Posterior cingulate gyrus (tissue), 11 donors: ENCODE measurements at regions of chr15 and their contacts with region 1.

Region 1: DNA sequence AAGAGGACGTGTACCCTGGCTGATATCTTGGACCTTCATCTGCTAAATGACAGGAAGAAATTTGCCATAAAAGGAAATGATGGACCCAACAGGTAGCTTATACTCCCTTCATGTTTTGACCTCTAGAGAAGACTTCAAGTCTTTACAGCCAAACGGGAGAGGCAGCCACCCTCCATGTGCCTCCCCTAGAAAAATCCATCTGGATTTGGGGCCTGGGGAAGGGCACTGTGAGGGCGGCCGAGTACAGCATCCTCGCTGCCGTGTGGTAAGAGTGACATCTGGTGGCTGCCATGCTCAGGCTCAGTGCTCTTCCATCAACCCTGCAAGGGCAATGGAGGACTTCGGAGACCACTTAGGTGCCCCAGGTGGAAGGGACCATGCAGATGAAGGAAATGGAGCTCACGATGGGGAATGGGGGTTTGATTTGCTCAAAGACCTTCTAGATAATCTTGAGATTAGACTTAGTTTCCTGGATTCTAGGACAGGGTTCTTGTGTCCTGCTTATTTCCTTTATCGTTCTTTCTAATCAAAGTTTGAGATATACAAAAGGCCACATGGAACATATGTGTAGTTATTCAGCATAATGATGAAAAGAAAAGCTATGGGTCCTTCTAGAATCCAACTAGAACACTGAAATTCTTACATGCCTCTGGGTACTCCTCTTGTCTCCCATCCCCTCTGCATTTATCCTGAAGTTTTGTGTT is 44.4 kb downstream of the AQP9 start:
- DNase-seq: peak in 9 of 10 donors; percentile 24 to 91 (median 55)

Region 2: GRCh38 chr15:57561041-57561711 is 621.4 kb before region 1 on chr15:
- intact Hi-C with region 1: loop called (anchors 10 kb)
- DNase-seq: peak in 7 of 10 donors; percentile 33 to 94 (median 68)

Region 3: GRCh38 chr15:57667171-57667849 is 515.3 kb before region 1 on chr15:
- intact Hi-C with region 1: loop called (anchors 10 kb)
- DNase-seq: no peak

Region 4: GRCh38 chr15:57751177-57751800 is 431.3 kb before region 1 on chr15:
- intact Hi-C with region 1: loop called (anchors 10 kb)
- DNase-seq: peak in 1 of 10 donors; percentile 30